ENCODE measurements at regions of chr5 and their contacts with region 1.

Region 1: GRCh38 chr5:444226-444625 is 1.2 kb downstream of the EXOC3 start:
- DNase-seq: no peak
- H3K4me3 ChIP-seq: peak overlapping the region; percentile 97
- H3K27ac ChIP-seq: no peak overlapping the region
- H3K4me1 ChIP-seq: peaks cover 9% of the 10 kb centered on the region
- H3K27me3 ChIP-seq: no peaks in the 10 kb centered on the region
- CTCF ChIP-seq: no peak

Region 2: DNA sequence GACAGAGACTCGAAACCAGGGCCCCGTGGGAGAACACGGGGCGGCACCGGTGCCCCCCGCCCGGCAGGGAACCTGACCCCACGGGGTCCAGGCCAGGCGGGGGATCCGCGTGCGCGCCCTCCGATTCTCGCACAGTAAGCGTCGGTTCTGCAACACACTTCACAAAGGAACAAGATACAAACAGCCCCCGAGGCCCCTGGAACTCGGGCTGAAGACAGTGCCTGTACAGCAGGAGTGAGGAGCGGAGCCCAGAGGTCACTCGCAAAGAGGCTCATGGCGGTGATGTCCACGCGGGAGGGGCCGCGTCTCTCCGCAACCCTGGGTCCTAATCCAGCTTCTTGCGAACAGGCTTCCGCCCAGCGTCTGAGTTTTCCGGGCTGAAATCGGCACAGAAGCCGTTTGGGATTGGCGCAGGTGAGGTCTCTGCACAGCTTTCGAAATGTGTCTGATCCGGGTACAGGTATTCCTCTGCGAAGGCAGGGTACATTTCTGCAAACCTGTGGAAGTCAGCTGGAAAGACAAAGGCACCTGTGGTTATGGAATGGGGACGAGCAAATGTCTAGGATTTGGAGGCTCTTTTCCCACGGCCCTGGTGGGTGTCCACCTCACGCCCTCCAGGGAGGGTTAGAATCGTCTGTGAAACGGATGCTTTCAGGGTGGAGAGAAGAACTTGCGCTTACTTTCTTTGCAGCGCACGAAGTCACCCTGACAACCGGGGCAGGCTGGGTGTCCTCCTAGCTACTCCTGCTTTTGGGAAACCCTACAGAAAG is 1019.3 kb after region 1 on chr5:
- CTCF ChIA-PET with region 1: no interaction called
- POLR2A ChIA-PET with region 1: interaction called, 11 read pairs
- intact Hi-C with region 1: no loop called
- DNase-seq: no peak
- H3K4me3 ChIP-seq: no peak overlapping the region
- H3K27ac ChIP-seq: no peak overlapping the region
- H3K4me1 ChIP-seq: no peaks in the 10 kb centered on the region
- H3K27me3 ChIP-seq: no peaks in the 10 kb centered on the region
- CTCF ChIP-seq: no peak

Measured in A673 (cell line).